ENCODE measurements at regions of chr1 and their contacts with region 1.

Region 1: GRCh38 chr1:36516372-36517325 is 33.9 kb upstream of the CSF3R start:
- DNase-seq: peak; percentile 36
- H3K4me3 ChIP-seq: no peak overlapping the region
- H3K27ac ChIP-seq: no peak overlapping the region
- H3K4me1 ChIP-seq: peaks cover 22% of the 10 kb centered on the region
- H3K27me3 ChIP-seq: no peaks in the 10 kb centered on the region
- CTCF ChIP-seq: peak; percentile 89 to 95

Region 2: DNA sequence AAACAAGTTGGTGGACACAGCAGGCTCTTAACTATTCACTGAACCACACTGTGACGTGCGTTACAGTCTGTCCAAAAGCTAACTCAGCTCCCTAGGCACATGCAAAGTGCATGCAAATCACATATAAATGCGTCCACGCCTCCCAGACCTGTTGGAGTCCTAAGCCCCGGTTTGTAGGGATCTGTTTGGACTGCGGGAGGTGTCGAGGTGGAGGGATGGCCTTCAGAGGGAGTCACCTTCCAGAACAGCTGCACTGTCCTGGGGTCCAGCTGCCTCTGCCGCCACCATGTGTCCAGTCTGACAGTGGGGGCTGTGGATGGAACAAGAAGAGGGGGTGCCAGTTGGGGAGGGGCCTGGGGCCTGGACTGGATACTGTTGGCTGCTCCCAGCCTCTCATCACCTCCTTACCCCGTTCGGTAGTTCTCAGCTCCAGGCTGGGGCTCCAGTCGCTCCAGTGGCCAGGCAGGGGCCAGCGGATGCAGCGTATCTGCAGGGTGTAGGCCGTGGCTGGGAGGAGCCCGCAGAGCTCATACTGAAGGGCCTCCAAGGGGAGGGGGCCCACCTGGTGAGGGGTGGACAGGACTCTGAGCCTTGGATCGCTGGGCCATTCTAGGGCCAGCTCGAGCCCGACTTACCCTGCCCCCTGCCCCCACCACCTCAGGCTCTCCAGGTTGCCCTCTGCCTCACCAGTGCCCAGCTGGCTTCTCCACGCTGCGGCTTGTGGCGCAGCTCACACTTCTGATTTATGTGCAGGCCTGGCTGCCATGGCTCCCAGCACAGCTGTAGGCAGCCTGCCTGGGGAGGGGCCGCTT is 44.6 kb before region 1 on chr1:
- CTCF ChIA-PET with region 1: no interaction called
- dilution Hi-C with region 1: loop called (anchors 5 kb)
- in situ Hi-C with region 1: no loop called
- intact Hi-C with region 1: no loop called
- DNase-seq: no peak
- H3K4me3 ChIP-seq: no peak overlapping the region
- H3K27ac ChIP-seq: no peak overlapping the region
- H3K4me1 ChIP-seq: no peaks in the 10 kb centered on the region
- H3K27me3 ChIP-seq: no peaks in the 10 kb centered on the region
- CTCF ChIP-seq: no peak

Region 3: GRCh38 chr1:36560621-36561334 is 44.1 kb after region 1 on chr1:
- CTCF ChIA-PET with region 1: no interaction called
- dilution Hi-C with region 1: loop called (anchors 5 kb)
- in situ Hi-C with region 1: no loop called
- intact Hi-C with region 1: no loop called
- DNase-seq: no peak
- H3K4me3 ChIP-seq: no peak overlapping the region
- H3K27ac ChIP-seq: no peak overlapping the region
- H3K4me1 ChIP-seq: no peaks in the 10 kb centered on the region
- H3K27me3 ChIP-seq: no peaks in the 10 kb centered on the region
- CTCF ChIP-seq: no peak

Region 4: DNA sequence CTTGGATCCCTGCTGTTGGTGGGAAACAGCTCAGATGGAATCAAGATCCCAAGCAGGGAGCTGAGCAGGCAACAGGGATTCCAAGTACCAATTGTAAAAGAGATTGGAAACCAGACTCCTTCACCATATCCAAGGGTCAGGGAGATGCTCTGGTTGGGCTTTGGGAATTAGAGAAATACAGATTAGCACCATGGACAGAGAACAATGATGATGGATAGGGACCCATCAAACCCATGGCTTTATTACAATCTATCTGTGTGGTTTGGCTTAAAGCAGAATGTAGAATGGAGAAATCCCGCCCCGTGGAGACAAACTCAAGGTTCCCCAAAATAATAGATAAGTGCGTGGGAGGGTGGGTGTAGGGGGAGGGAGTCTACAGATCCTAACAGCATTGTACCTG is 86.8 kb after region 1 on chr1:
- CTCF ChIA-PET with region 1: no interaction called
- dilution Hi-C with region 1: no loop called
- in situ Hi-C with region 1: no loop called
- intact Hi-C with region 1: no loop called
- DNase-seq: no peak
- H3K4me3 ChIP-seq: no peak overlapping the region
- H3K27ac ChIP-seq: no peak overlapping the region
- H3K4me1 ChIP-seq: no peaks in the 10 kb centered on the region
- H3K27me3 ChIP-seq: no peaks in the 10 kb centered on the region
- CTCF ChIP-seq: no peak

Region 5: DNA sequence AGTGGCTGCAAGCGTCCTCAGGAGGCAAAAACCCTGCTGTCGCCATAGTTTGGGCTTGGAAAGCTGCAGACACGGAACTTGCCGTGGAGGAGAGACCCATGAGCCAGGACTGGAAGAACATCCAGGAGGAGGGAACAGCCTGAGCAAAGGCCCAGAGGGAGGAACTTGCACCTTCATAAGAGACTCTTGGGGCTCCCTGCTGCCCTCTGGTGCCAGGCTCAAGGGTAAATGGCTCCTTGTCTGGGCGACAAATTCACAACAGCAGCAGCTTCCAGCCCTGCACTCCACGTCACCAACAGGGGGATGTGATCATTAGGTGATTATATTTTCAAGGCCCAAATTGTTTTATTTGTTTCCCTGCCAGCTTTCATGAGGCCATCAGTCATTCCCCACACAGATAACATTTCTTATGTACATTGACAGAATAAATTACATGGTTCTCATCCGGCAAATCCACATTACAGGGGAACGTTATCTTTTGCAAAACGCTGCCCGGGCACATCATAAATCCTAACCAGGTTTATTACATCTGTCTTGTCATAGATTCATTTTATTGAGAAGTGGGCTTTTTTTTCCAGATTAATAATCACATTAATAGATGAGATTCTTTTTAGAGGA is 660.7 kb after region 1 on chr1:
- CTCF ChIA-PET with region 1: no interaction called
- dilution Hi-C with region 1: no loop called
- in situ Hi-C with region 1: no loop called
- intact Hi-C with region 1: loop called (anchors 1 kb)
- DNase-seq: peak; percentile 3
- H3K4me3 ChIP-seq: no peak overlapping the region
- H3K27ac ChIP-seq: no peak overlapping the region
- H3K4me1 ChIP-seq: no peaks in the 10 kb centered on the region
- H3K27me3 ChIP-seq: no peaks in the 10 kb centered on the region
- CTCF ChIP-seq: peak; percentile 33 to 68

Region 6: GRCh38 chr1:37434292-37434907 is 917.8 kb after region 1 on chr1:
- CTCF ChIA-PET with region 1: no interaction called
- dilution Hi-C with region 1: no loop called
- in situ Hi-C with region 1: no loop called
- intact Hi-C with region 1: loop called (anchors 1 kb)
- DNase-seq: no peak
- H3K4me3 ChIP-seq: no peak overlapping the region
- H3K27ac ChIP-seq: no peak overlapping the region
- H3K4me1 ChIP-seq: no peaks in the 10 kb centered on the region
- H3K27me3 ChIP-seq: no peaks in the 10 kb centered on the region
- CTCF ChIP-seq: peak; percentile 87 to 96

Measured in mammary epithelial cell (primary cell).